Activated CD4-positive, alpha-beta memory T cell treated with anti-CD3 and anti-CD28 coated beads for 36 hours (primary cell): ENCODE measurements at regions of chr18 and their contacts with region 1.

Region 1: GRCh38 chr18:59324623-59324971 is 6.1 kb upstream of the CPLX4 start:
- DNase-seq: no peak
- H3K4me3 Mint-ChIP-seq: no peak overlapping the region
- H3K27ac Mint-ChIP-seq: no peak overlapping the region
- H3K4me1 Mint-ChIP-seq: no peaks in the 10 kb centered on the region
- H3K27me3 Mint-ChIP-seq: no peaks in the 10 kb centered on the region

Region 2: GRCh38 chr18:59308248-59308937 is 16.2 kb before region 1 on chr18:
- CTCF ChIA-PET with region 1: interaction called, 10 read pairs
- POLR2A ChIA-PET with region 1: no interaction called
- intact Hi-C with region 1: no loop called
- DNase-seq: peak; percentile 75
- H3K4me3 Mint-ChIP-seq: no peak overlapping the region
- H3K27ac Mint-ChIP-seq: no peak overlapping the region
- H3K4me1 Mint-ChIP-seq: peaks cover 3% of the 10 kb centered on the region
- H3K27me3 Mint-ChIP-seq: peaks cover 37% of the 10 kb centered on the region